ENCODE measurements at regions of chr2 and their contacts with region 1.

Region 1: GRCh38 chr2:234451852-234452625 is 44.8 kb downstream of the ARL4C start:
- DNase-seq: peak; percentile 71
- H3K4me3 ChIP-seq: no peak overlapping the region
- H3K27me3 ChIP-seq: no peaks in the 10 kb centered on the region
- CTCF ChIP-seq: no peak

Region 2: DNA sequence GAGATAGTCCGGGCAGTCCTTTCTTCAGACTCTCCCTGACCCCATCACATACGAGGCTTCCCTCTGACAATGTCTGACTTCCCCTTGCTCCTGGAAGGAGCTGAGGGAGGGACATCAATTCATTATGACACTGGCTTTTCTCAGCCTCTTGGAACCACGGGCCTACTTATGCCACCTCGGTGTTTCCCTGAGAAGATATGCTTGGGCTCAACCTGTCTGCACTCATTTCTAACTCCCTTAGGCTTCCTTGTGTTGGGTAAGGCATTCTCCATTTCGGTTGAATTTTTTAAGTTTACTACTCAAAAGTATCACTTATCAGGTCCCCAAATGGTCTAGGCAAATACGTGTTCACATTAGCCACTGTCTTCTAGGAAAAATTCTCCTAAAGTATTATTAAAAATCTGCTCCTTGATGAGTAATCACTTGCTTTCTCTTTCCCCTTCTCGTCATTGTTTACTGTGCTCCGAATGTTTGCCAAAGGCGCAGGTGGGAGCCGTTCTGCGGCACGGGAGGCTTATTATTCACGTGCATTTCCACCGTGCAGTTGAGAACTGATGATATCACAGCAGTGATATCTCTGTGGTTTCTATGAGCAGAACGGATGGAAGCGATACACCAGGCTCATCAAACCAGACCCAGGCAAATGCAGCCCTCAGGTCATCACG is 11.7 kb after region 1 on chr2:
- CTCF ChIA-PET with region 1: no interaction called
- POLR2A ChIA-PET with region 1: no interaction called
- DNase-seq: no peak
- H3K4me3 ChIP-seq: no peak overlapping the region
- H3K27me3 ChIP-seq: no peaks in the 10 kb centered on the region
- CTCF ChIP-seq: no peak

Region 3: GRCh38 chr2:234479465-234479864 is 27.4 kb after region 1 on chr2:
- CTCF ChIA-PET with region 1: no interaction called
- POLR2A ChIA-PET with region 1: interaction called, 12 read pairs
- DNase-seq: no peak
- H3K4me3 ChIP-seq: no peak overlapping the region
- H3K27me3 ChIP-seq: no peaks in the 10 kb centered on the region
- CTCF ChIP-seq: no peak

Region 4: DNA sequence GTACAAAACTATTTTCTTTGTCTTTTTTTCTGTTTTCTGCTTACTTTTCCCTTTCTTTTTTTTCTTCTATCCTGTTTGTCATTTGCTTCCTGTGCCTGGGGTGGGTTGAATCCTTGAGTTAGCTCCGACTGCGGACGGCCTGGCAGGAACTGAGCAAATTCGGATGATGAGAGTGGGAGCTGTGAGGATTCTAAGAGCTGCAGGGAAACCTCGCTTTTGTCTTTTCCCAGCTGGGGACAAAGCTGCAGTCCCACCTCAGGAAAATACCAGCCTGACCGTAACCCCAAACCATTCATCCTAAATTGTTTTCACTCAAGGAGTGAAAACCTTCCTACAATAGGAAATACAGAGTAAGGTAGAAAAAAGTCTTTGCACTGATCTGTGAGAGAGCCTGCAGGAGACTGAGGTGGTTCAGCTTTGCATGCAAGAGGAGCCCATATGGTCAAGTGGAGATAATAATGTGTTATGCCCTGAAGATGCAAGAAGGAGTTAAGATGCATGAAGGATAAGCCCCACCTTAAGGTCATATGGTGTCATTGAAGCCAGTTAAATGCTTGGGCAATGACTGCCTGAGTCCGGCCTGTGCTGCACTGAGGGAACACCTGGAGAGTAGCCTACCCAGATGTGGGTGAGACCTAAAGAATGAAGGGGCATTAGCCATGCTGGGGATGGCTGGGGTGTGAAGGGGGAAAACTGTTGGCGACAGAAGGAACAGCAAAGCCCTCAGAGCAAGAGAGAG is 76.5 kb after region 1 on chr2:
- CTCF ChIA-PET with region 1: no interaction called
- POLR2A ChIA-PET with region 1: no interaction called
- DNase-seq: no peak
- H3K4me3 ChIP-seq: no peak overlapping the region
- H3K27me3 ChIP-seq: peaks cover 5% of the 10 kb centered on the region
- CTCF ChIP-seq: no peak

Measured in BJ (cell line).